Sigmoid colon (tissue), 7 donors: ENCODE measurements at regions of chr12 and their contacts with region 1.

Region 1: DNA sequence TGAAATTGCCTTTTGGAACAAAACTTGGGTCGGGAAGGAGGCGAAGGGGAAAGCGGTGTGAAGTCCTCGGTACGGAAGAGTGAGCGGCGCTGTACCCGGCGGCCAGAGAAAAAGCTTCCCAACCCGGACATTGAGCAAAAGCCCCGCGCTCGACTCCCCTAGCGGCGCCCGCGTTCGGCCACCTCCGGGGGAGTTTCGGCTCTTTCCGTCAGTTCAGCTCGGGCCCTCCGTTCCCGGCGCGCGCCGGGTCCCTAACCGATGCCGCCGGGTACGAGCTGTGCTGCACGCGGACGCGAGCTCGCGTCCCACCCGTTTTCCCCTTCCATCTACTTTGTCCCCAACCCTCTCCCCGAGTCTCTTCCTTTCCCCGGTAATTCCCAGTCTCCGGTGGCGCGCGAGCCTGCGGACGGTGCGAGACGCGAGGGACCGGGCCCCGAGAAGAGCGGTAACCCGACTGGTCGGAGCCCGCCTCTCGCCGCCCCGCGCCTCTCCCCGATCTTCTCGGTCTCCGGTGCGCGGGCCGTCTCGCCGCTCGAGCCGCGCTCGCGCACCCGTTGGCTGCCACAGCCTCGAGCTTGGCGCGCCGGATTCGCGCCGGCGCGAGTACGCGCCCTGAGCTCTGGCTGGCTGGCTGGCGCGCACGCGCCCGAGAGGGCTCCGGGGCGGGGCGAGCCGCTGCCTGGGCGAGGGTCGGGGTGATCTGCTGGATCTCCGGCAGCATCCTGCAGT is 446 bp upstream of the SPATS2 start:
- DNase-seq: peak; percentile 91
- H3K4me3 ChIP-seq: peak overlapping the region; percentile 81 to 93 (median 86)
- H3K27ac ChIP-seq: peak overlapping the region; percentile 98 to 99 (median 99)
- H3K4me1 ChIP-seq: peaks cover 0 to 31% (median 20%) of the 10 kb centered on the region in 4 donors
- H3K27me3 ChIP-seq: no peaks in the 10 kb centered on the region
- CTCF ChIP-seq: peak in 3 of 4 experiments; percentile 25 to 40 (median 35)
- EP300 ChIP-seq: no peak
- POLR2A ChIP-seq: no peak

Region 2: GRCh38 chr12:49403971-49404450 is 37.2 kb after region 1 on chr12:
- intact Hi-C with region 1: no loop called
- DNase-seq: no peak
- H3K4me3 ChIP-seq: no peak overlapping the region
- H3K27ac ChIP-seq: no peak overlapping the region
- H3K4me1 ChIP-seq: no peaks in the 10 kb centered on the region
- H3K27me3 ChIP-seq: no peaks in the 10 kb centered on the region
- CTCF ChIP-seq: no peak
- EP300 ChIP-seq: no peak
- POLR2A ChIP-seq: no peak

Region 3: DNA sequence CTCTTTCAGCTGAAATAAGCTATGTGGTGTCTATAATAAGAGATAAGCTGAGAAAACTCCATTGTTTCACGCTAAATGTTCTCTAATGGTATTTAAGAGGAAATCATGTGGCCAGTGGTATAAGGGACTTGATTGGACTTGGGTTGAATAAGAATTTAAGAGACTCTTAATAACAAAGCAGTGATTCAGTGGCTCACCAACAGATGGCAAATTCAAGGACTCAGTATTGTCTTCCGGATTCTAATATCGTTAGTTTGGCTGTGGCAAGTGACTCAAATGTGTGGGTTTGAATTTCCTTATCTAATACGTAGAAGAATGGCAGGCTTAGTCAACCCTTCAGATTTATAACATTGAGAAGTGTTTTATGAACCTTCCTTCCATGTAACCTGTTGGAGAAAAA is 122.9 kb after region 1 on chr12:
- intact Hi-C with region 1: loop called (anchors 5 kb)
- DNase-seq: no peak
- H3K4me3 ChIP-seq: no peak overlapping the region
- H3K27ac ChIP-seq: no peak overlapping the region
- H3K4me1 ChIP-seq: peaks cover 0 to 18% (median 11%) of the 10 kb centered on the region in 4 donors
- H3K27me3 ChIP-seq: no peaks in the 10 kb centered on the region
- CTCF ChIP-seq: no peak
- EP300 ChIP-seq: no peak
- POLR2A ChIP-seq: no peak

Region 4: DNA sequence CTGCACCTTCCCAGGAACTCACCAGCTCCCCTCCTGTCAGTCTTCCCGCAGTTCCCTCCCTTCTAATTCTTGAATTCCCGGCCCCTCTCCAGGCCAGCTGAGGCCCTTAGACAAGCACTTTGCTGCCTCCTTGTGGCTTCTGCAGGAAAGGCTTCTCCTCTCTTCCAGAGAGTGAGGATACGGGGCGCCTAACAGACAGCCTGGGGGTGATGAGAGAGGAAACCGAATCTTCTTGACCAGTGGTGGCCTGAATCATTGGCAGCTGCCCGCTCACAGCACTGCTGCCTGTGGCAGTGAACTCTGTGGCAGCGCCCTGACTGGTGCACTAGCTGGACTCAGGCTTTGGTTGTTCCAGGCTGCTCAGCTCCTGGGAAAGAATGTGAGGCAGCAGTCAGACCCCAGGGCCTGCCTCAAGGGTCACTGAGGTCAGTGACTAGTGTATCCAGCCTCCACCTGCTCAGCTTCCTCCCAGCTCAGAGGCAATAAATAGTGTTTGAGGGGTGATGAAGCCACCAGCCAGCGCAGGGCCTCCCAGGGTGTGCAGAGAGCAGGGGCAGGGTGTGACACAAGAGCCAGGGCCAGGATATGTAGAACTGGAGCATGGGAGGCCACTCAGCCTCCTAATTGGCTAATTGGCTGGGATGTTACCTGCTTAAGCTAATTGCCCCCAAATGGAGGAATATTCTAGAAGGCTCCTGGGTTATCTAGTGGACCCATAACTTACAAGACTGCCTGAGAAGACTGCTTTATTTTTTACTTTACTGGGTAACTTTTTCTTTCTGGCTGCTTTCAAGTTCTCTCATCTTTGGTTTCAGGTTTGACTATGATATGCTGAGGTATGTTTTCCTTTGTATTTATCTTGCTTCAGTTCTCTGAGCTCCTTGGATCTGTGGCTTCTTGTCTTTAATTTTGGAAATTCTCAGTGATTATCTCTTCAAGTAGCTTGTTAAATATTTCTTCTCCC is 214.0 kb after region 1 on chr12:
- intact Hi-C with region 1: loop called (anchors 5 kb)
- DNase-seq: peak; percentile 81
- H3K4me3 ChIP-seq: no peak overlapping the region
- H3K27ac ChIP-seq: peak overlapping the region; percentile 31 to 63 (median 48)
- H3K4me1 ChIP-seq: peaks cover 0 to 39% (median 25%) of the 10 kb centered on the region in 4 donors
- H3K27me3 ChIP-seq: no peaks in the 10 kb centered on the region
- CTCF ChIP-seq: peak; percentile 53 to 80 (median 78)
- EP300 ChIP-seq: no peak
- POLR2A ChIP-seq: no peak